ENCODE measurements at regions of chr12 and their contacts with region 1.

Region 1: GRCh38 chr12:75977952-75978671 is 53.5 kb downstream of the PHLDA1 start:
- DNase-seq: peak; percentile 100
- ATAC-seq: peak; percentile 94
- H3K4me3 ChIP-seq: peak overlapping the region; percentile 7 to 51 (median 15); a peak in 3 of 6 replicates
- H3K27ac ChIP-seq: peak overlapping the region; percentile 91
- H3K4me1 ChIP-seq: peaks cover 85% of the 10 kb centered on the region
- H3K27me3 ChIP-seq: no peaks in the 10 kb centered on the region
- CTCF ChIP-seq: no peak
- EP300 ChIP-seq: peak; percentile 96 to 98
- POLR2A ChIP-seq: peak in 1 of 2 experiments; percentile 41; a peak in 3 of 4 replicates
- RAD21 ChIP-seq: peak; percentile 67; the same call in 1 of the 2 replicates

Region 2: GRCh38 chr12:74431801-74432200 is 1546.3 kb before region 1 on chr12:
- CTCF ChIA-PET with region 1: no interaction called
- POLR2A ChIA-PET with region 1: no interaction called
- in situ Hi-C with region 1: no loop called
- intact Hi-C with region 1: loop called (anchors 10 kb)
- DNase-seq: no peak
- ATAC-seq: no peak
- H3K4me3 ChIP-seq: no peak overlapping the region
- H3K27ac ChIP-seq: no peak overlapping the region
- H3K4me1 ChIP-seq: no peaks in the 10 kb centered on the region
- H3K27me3 ChIP-seq: no peaks in the 10 kb centered on the region
- CTCF ChIP-seq: no peak
- EP300 ChIP-seq: no peak
- POLR2A ChIP-seq: no peak
- RAD21 ChIP-seq: no peak

Region 3: GRCh38 chr12:75900781-75901254 is 77.3 kb before region 1 on chr12:
- CTCF ChIA-PET with region 1: no interaction called
- POLR2A ChIA-PET with region 1: no interaction called
- in situ Hi-C with region 1: no loop called
- intact Hi-C with region 1: loop called (anchors 2 kb)
- DNase-seq: peak; percentile 94
- ATAC-seq: peak; percentile 100
- H3K4me3 ChIP-seq: peak overlapping the region in 2 of 3 experiments; percentile 1 to 37; a peak in 2 of 6 replicates
- H3K27ac ChIP-seq: peak overlapping the region; percentile 69
- H3K4me1 ChIP-seq: peaks cover 39% of the 10 kb centered on the region
- H3K27me3 ChIP-seq: no peaks in the 10 kb centered on the region
- CTCF ChIP-seq: no peak
- EP300 ChIP-seq: peak; percentile 10 to 90; a peak in 2 of 4 replicates
- POLR2A ChIP-seq: no peak
- RAD21 ChIP-seq: peak; percentile 29; the same call in 1 of the 2 replicates

Region 4: GRCh38 chr12:75960086-75960910 is 17.8 kb before region 1 on chr12:
- CTCF ChIA-PET with region 1: no interaction called
- POLR2A ChIA-PET with region 1: interaction called, 14 read pairs
- in situ Hi-C with region 1: no loop called
- intact Hi-C with region 1: no loop called
- DNase-seq: peak; percentile 81
- ATAC-seq: peak; percentile 85
- H3K4me3 ChIP-seq: peak overlapping the region in 1 of 3 experiments; percentile 8; a peak in 1 of 6 replicates
- H3K27ac ChIP-seq: peak overlapping the region; percentile 54
- H3K4me1 ChIP-seq: peaks cover 56% of the 10 kb centered on the region
- H3K27me3 ChIP-seq: no peaks in the 10 kb centered on the region
- CTCF ChIP-seq: no peak
- EP300 ChIP-seq: peak in 1 of 2 experiments; percentile 91; a peak in 1 of 4 replicates
- POLR2A ChIP-seq: no peak
- RAD21 ChIP-seq: no peak

Region 5: DNA sequence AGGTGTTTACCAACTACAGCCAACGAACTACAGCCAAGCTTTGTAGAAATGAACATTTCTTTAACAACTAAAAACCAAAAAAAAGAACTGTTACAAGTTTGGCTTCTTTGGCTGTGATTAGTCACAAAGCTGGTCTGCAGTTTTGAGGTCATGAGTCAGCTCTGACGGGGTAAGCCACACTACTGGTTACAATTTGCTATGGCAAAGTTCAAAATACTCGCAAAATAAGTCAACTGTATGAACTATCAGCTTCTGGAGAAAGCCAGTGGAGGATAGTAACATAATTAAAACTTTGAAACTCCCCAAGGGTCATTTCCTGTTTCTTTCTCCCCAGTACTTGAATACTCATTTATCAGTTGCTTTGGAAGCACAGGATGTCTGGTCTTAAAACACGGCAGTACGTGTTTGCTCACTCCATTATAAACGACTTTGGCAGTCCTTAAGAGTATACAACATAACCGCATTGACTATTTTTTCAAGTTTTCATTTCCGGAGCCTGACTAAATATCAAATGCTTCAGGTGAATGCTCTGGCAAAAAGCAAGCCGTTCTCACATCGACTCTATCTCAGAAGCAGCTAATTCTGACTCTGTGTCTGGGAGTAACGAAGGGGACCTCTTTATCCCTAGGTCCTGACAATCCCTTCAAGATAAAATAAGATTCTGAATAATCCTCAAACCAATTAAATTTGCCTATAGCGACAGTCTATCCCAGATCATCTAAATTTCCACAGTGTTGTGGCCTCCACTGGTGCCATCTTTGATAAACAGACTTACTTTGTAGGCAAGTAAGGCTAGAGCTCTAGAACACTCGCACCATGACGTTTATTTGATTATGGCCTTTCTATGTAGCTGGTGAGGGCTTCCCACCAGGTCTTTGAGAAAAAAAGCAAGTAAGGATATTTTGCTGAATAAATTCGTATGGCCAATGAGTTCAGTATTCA is 42.9 kb after region 1 on chr12:
- CTCF ChIA-PET with region 1: no interaction called
- POLR2A ChIA-PET with region 1: interaction called, 4 read pairs
- in situ Hi-C with region 1: no loop called
- intact Hi-C with region 1: loop called (anchors 1 kb)
- DNase-seq: no peak
- ATAC-seq: no peak
- H3K4me3 ChIP-seq: no peak overlapping the region
- H3K27ac ChIP-seq: peak overlapping the region; percentile 3
- H3K4me1 ChIP-seq: peaks cover 48% of the 10 kb centered on the region
- H3K27me3 ChIP-seq: no peaks in the 10 kb centered on the region
- CTCF ChIP-seq: no peak
- EP300 ChIP-seq: no peak
- POLR2A ChIP-seq: no peak
- RAD21 ChIP-seq: no peak

Measured in HepG2 (cell line).